MCF 10A (cell line): ENCODE measurements at regions of chr16 and their contacts with region 1.

Region 1: GRCh38 chr16:14070877-14071575 is at the start of gene MRTFB:
- DNase-seq: peak; percentile 79
- H3K4me3 Mint-ChIP-seq: peak within 1 kb of the TSS; percentile 90
- H3K27ac Mint-ChIP-seq: peak within 1 kb of the TSS; percentile 93
- H3K4me1 Mint-ChIP-seq: peaks cover 11% of the 10 kb centered on the region
- H3K27me3 Mint-ChIP-seq: no peaks in the 10 kb centered on the region
- CTCF ChIP-seq: no peak
- total RNA-seq, gene MRTFB: 30.0 and 33.3 TPM in 2 replicates

Region 2: DNA sequence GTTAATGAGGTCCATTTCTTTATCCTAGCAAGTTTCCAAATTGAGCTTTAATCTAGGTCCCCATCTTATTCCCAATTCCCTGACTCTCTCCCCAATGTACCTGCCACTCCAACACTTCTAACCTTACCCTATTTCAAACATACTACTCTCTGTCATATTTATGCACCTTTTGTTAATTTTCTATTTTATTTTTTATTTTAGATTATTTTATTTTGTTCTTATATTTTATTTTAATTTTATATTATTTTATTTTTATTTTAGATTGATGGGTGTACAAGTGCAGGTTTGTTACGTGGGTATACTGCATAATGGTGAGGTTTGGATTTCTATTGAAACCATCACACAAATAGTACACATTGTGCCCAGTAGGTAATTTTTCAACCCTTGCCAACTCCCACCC is 485.0 kb before region 1 on chr16:
- CTCF ChIA-PET with region 1: no interaction called
- POLR2A ChIA-PET with region 1: no interaction called
- intact Hi-C with region 1: no loop called
- DNase-seq: no peak
- H3K4me3 Mint-ChIP-seq: no peak overlapping the region
- H3K27ac Mint-ChIP-seq: no peak overlapping the region
- H3K4me1 Mint-ChIP-seq: no peaks in the 10 kb centered on the region
- H3K27me3 Mint-ChIP-seq: no peaks in the 10 kb centered on the region
- CTCF ChIP-seq: no peak

Region 3: DNA sequence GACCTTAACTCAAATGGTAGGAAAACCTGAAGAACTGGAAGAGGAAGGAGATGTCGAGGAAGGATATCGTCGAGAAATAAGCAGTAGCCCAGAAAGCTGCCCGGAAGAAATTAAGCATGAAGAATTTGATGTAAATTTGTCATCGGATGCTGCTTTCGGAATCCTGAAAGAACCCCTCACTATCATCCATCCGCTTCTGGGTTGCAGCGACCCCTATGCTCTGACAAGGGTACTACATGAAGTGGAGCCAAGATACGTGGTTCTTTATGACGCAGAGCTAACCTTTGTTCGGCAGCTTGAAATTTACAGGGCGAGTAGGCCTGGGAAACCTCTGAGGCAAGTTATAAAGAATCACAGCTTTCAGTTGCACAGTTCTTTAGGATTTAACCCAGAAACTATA is 135.6 kb before region 1 on chr16:
- CTCF ChIA-PET with region 1: interaction called, 8 read pairs
- POLR2A ChIA-PET with region 1: no interaction called
- intact Hi-C with region 1: loop called (anchors 5 kb)
- DNase-seq: no peak
- H3K4me3 Mint-ChIP-seq: no peak overlapping the region
- H3K27ac Mint-ChIP-seq: no peak overlapping the region
- H3K4me1 Mint-ChIP-seq: peaks cover 9% of the 10 kb centered on the region
- H3K27me3 Mint-ChIP-seq: no peaks in the 10 kb centered on the region
- CTCF ChIP-seq: no peak

Region 4: GRCh38 chr16:14003074-14003570 is 67.9 kb before region 1 on chr16:
- CTCF ChIA-PET with region 1: interaction called, 3 read pairs
- POLR2A ChIA-PET with region 1: interaction called, 5 read pairs
- intact Hi-C with region 1: loop called (anchors 1 kb)
- DNase-seq: peak; percentile 92
- H3K4me3 Mint-ChIP-seq: peak overlapping the region; percentile 71
- H3K27ac Mint-ChIP-seq: peak overlapping the region; percentile 77
- H3K4me1 Mint-ChIP-seq: peaks cover 30% of the 10 kb centered on the region
- H3K27me3 Mint-ChIP-seq: no peaks in the 10 kb centered on the region
- CTCF ChIP-seq: no peak

Region 5: DNA sequence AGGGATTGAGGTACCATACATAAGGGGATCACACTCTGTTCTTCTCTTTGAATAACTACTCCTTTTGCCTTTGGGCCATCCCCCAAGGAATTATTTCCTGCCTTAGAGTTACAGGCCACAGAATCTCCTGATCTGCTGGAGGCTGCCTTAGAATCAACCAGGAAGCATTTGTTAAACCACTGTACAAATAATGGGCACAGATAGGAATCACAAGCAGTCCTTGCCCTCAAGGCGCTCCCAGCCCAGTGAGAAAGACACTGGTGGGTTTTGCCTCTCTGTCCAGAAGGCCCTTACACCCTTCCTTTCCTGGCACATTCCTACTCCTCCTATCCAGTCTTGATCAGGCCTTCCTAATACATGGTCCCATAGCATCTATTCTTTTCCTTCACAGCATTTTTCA is 46.0 kb after region 1 on chr16:
- CTCF ChIA-PET with region 1: no interaction called
- POLR2A ChIA-PET with region 1: no interaction called
- intact Hi-C with region 1: no loop called
- DNase-seq: no peak
- H3K4me3 Mint-ChIP-seq: no peak overlapping the region
- H3K27ac Mint-ChIP-seq: no peak overlapping the region
- H3K4me1 Mint-ChIP-seq: peaks cover 6% of the 10 kb centered on the region
- H3K27me3 Mint-ChIP-seq: no peaks in the 10 kb centered on the region
- CTCF ChIP-seq: no peak

Region 6: GRCh38 chr16:14249291-14250032 is 178.4 kb after region 1 on chr16:
- CTCF ChIA-PET with region 1: no interaction called
- POLR2A ChIA-PET with region 1: no interaction called
- intact Hi-C with region 1: loop called (anchors 5 kb)
- DNase-seq: peak; percentile 54
- H3K4me3 Mint-ChIP-seq: no peak overlapping the region
- H3K27ac Mint-ChIP-seq: no peak overlapping the region
- H3K4me1 Mint-ChIP-seq: no peaks in the 10 kb centered on the region
- H3K27me3 Mint-ChIP-seq: no peaks in the 10 kb centered on the region
- CTCF ChIP-seq: peak; percentile 77

Region 7: DNA sequence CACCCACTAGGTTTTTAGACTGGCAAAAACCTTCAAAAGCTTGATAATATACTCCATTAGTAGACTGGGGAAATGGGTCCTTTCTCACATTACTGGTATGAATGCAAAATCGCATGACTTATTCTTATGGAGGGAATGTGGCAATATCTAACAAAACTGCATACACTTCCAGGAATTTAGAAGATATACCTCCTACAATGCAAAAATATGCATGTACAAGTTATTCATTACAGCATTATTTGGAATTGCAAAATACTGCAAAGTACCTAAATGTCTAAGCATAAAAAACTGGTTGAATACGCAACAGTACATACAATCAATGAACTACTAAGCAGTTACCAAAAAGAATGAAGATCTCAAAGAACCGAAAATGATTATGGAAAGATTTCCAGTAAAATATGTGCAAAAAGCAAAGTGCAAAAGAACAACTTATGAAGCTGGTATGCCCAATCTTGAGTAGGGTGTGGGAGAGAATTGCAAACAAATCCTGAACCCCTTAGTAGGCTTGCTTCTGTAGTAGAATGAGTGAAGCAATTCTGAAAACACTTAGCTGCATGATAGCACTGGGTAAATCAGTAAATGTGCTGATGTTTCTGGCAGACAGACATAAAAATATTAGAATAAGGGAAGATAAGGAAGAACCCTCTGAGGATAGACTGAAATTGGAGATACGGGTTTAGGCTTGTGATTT is 378.9 kb after region 1 on chr16:
- CTCF ChIA-PET with region 1: no interaction called
- POLR2A ChIA-PET with region 1: no interaction called
- intact Hi-C with region 1: no loop called
- DNase-seq: peak; percentile 57
- H3K4me3 Mint-ChIP-seq: no peak overlapping the region
- H3K27ac Mint-ChIP-seq: peak overlapping the region; percentile 56
- H3K4me1 Mint-ChIP-seq: peaks cover 23% of the 10 kb centered on the region
- H3K27me3 Mint-ChIP-seq: no peaks in the 10 kb centered on the region
- CTCF ChIP-seq: no peak